ENCODE measurements at regions of chr10 and their contacts with region 1.

Region 1: DNA sequence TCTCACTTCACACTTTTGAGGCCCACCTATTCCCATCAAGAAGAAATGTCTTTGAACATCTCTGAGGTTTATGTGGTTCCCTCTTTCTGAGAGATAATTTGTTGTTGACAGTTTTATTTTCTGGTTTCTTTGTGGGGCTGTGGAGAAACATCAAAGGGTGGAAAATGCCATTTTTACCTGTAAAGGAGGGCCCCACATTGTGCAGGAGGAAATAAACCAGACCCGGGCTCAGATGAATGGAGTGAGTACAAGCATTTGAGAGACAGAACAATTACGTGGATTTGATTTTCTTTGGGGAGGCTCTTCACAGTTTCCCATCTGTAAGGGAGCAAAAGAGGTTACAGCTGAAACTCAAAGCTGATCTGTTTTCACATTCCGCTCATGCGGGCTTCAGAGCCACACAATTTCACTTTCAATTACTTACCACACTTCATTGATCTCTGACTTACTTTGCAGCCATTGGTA is 29.8 kb downstream of the ITPRIP start:
- DNase-seq: peak in 5 of 14 experiments; percentile 40 to 56 (median 54)
- ATAC-seq: peak; percentile 69
- H3K4me3 ChIP-seq: no peak overlapping the region
- H3K4me3 Mint-ChIP-seq: peak overlapping the region; percentile 63
- H3K27ac ChIP-seq: peak overlapping the region in 1 of 2 donors; percentile 44
- H3K27ac Mint-ChIP-seq: peak overlapping the region; percentile 71
- H3K4me1 ChIP-seq: peaks cover 78% of the 10 kb centered on the region
- H3K4me1 Mint-ChIP-seq: peaks cover 83% of the 10 kb centered on the region
- H3K27me3 ChIP-seq: no peaks in the 10 kb centered on the region
- H3K27me3 Mint-ChIP-seq: no peaks in the 10 kb centered on the region
- CTCF ChIP-seq: no peak

Region 2: DNA sequence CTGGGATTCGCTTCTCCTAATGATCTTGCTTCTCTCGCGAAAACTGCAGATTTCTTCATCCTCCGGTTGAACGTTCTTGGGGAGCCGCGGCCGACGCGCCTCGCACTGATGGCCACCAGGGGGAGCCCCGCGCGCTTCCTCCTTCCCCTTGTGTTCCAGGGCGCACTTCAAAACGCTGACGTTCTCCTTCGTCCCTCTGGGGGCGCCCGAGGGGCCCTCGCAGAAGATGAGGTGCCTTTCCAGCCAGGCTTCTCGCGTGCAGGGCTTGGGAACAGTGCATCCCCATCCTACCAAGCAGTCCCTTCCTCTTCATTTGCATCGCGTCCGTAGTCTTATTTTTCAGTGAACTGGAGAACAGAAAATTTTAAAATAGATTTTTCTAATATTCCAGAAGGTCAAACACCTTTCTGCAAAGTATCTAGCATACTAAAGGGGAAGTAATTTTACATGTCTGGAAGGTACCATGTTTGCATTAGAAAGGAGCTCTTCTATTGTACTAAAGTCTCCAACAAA is 17.0 kb before region 1 on chr10:
- CTCF ChIA-PET with region 1: interaction called, 37 read pairs
- POLR2A ChIA-PET with region 1: interaction called, 9 read pairs
- intact Hi-C with region 1: loop called (anchors 1 to 2 kb)
- DNase-seq: peak; percentile 81 to 95 (median 86)
- ATAC-seq: peak; percentile 100
- H3K4me3 ChIP-seq: no peak overlapping the region
- H3K4me3 Mint-ChIP-seq: no peak overlapping the region
- H3K27ac ChIP-seq: no peak overlapping the region
- H3K27ac Mint-ChIP-seq: no peak overlapping the region
- H3K4me1 ChIP-seq: peaks cover 8% of the 10 kb centered on the region
- H3K4me1 Mint-ChIP-seq: peaks cover 7% of the 10 kb centered on the region
- H3K27me3 ChIP-seq: peaks cover 0 to 4% of the 10 kb centered on the region in 2 experiments
- H3K27me3 Mint-ChIP-seq: peaks cover 26% of the 10 kb centered on the region
- CTCF ChIP-seq: peak; percentile 100

Region 3: DNA sequence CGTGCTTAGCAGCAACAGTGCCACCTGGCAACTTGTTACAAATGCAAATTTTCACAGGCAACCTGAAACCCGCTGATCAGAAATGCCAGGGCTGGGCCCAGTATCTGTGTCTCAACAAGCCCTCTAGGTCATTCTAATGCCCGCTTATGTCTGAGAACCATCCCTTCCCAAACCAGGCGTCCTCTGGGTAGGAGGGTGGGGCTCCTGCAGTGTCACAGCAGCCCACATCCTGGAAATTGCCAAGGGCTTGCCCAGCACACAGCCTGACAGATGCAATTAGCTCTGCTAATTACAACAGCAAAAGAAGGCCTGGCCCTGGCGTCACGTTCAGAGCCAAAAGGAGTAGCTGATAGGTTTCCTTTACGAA is 13.9 kb after region 1 on chr10:
- CTCF ChIA-PET with region 1: interaction called, 12 read pairs
- POLR2A ChIA-PET with region 1: interaction called, 43 read pairs
- intact Hi-C with region 1: loop called in 1 of 2 experiments (anchors 1 kb)
- DNase-seq: peak in 5 of 14 experiments; percentile 32 to 79 (median 47)
- ATAC-seq: peak; percentile 50
- H3K4me3 ChIP-seq: peak overlapping the region; percentile 22
- H3K4me3 Mint-ChIP-seq: peak overlapping the region; percentile 81
- H3K27ac ChIP-seq: peak overlapping the region; percentile 39 to 79
- H3K27ac Mint-ChIP-seq: peak overlapping the region; percentile 88
- H3K4me1 ChIP-seq: peaks cover 93% of the 10 kb centered on the region
- H3K4me1 Mint-ChIP-seq: peaks cover 99% of the 10 kb centered on the region
- H3K27me3 ChIP-seq: no peaks in the 10 kb centered on the region
- H3K27me3 Mint-ChIP-seq: no peaks in the 10 kb centered on the region
- CTCF ChIP-seq: no peak

Region 4: GRCh38 chr10:104337974-104338735 is 29.7 kb after region 1 on chr10 and contains the start of gene ITPRIP:
- CTCF ChIA-PET with region 1: interaction called, 37 read pairs
- POLR2A ChIA-PET with region 1: interaction called, 99 read pairs
- intact Hi-C with region 1: loop called in 1 of 2 experiments (anchors 1 kb)
- DNase-seq: peak; percentile 54 to 87 (median 66)
- ATAC-seq: peak; percentile 71
- H3K4me3 ChIP-seq: peak within 1 kb of the TSS; percentile 92
- H3K4me3 Mint-ChIP-seq: peak within 1 kb of the TSS; percentile 96
- H3K27ac ChIP-seq: peak within 1 kb of the TSS; percentile 89 to 92
- H3K27ac Mint-ChIP-seq: peak within 1 kb of the TSS; percentile 88
- H3K4me1 ChIP-seq: peaks cover 51% of the 10 kb centered on the region
- H3K4me1 Mint-ChIP-seq: peaks cover 57% of the 10 kb centered on the region
- H3K27me3 ChIP-seq: no peaks in the 10 kb centered on the region
- H3K27me3 Mint-ChIP-seq: no peaks in the 10 kb centered on the region
- CTCF ChIP-seq: peak; percentile 24
- total RNA-seq, gene ITPRIP: 127 to 133 TPM

Region 5: DNA sequence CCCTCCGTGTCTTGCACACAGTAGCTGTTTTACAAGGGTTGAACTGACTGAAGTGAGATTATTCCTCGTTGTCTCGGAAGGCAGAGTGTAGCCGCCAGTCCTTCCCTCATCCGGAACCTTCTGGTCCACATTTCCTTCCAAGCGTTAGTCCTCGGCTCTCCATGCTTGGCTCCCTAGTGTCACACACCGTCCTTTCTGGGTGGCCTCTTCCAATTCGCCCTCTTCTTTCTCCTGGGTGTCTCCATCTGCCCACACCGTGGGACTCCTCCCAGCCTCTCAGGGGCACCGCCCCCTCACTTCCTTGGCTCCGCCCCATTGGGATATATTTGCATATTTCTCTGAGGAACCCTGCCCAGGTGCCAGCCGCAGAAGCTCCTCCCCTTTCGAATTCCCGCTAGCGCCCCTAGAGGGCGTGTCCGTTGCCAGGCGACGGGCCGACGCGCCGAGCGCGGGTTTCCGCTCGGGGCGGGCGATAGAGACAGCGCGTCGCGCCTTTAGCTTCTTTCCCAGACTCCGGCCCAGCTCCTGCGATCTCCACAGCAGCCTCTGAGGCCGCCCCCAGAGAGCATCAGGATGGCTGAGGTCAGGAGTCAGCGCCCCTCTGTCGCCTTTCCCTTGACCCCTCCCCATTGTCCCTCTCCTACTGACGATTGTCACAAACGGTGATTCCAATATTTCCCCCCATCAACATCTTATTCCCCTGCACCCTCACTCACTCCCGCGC is 45.0 kb after region 1 on chr10 and contains the start of gene CFAP58:
- CTCF ChIA-PET with region 1: interaction called, 107 read pairs
- POLR2A ChIA-PET with region 1: interaction called, 58 read pairs
- intact Hi-C with region 1: loop called (anchors 1 kb)
- DNase-seq: peak; percentile 84 to 97 (median 88)
- ATAC-seq: peak; percentile 80
- H3K4me3 ChIP-seq: peak within 1 kb of the TSS; percentile 46
- H3K4me3 Mint-ChIP-seq: peak within 1 kb of the TSS; percentile 26
- H3K27ac ChIP-seq: no peak within 1 kb of the TSS
- H3K27ac Mint-ChIP-seq: no peak within 1 kb of the TSS
- H3K4me1 ChIP-seq: peaks cover 27% of the 10 kb centered on the region
- H3K4me1 Mint-ChIP-seq: peaks cover 12% of the 10 kb centered on the region
- H3K27me3 ChIP-seq: no peaks in the 10 kb centered on the region
- H3K27me3 Mint-ChIP-seq: no peaks in the 10 kb centered on the region
- CTCF ChIP-seq: peak; percentile 84
- total RNA-seq, gene CFAP58: not detected